ENCODE measurements at regions of chr6 and their contacts with region 1.

Region 1: DNA sequence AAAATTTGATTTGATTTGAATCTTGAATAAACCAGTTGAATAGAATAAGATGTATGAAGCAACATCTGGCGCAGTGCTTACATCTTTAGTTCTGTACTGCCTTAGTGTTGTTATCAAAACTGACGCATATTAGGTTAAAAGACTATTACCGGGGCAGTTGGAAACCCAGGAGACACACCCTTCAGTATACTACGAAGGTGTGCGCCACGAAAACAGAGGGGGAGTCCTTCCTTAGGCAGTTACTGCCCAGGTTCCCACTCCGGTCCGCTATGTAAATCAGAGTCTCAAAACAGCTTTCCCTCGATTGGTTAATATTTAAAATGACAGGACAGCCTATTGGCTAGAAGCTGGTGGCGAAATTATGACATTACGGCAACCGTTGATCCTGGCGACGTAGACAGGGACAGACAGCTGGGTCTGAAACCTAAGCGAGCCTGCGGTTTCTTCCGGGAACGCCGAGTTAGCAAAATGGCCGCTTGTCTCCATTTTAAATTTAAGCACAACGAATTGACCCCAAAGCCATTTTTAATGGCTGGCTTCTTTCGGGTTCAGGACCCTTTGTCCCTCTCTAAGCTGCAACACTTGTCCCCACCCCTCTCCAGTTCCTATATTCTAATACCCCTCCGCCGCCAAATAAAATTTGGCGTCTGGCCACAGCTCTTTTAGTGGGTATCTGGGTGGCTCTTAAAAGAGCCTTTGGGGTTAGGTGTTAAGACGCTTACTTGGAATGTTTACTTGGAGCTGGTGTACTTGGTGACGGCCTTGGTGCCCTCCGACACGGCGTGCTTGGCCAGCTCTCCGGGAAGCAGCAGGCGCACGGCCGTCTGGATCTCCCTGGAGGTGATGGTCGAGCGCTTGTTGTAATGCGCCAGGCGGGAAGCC is 35.8 kb downstream of the HFE start:
- DNase-seq: peak; percentile 84 to 95
- H3K4me3 ChIP-seq: peak overlapping the region; percentile 82 to 100 (median 98)
- H3K27ac ChIP-seq: peak overlapping the region; percentile 91
- H3K4me1 ChIP-seq: peaks cover 1 to 9% (median 4%) of the 10 kb centered on the region in 4 experiments; a peak in 4 of 7 replicates
- H3K27me3 ChIP-seq: no peaks in the 10 kb centered on the region
- CTCF ChIP-seq: no peak
- EP300 ChIP-seq: peak in 1 of 2 experiments; percentile 98; a peak in 2 of 3 replicates
- POLR2A ChIP-seq: peak; percentile 96 to 97
- RAD21 ChIP-seq: no peak

Region 2: DNA sequence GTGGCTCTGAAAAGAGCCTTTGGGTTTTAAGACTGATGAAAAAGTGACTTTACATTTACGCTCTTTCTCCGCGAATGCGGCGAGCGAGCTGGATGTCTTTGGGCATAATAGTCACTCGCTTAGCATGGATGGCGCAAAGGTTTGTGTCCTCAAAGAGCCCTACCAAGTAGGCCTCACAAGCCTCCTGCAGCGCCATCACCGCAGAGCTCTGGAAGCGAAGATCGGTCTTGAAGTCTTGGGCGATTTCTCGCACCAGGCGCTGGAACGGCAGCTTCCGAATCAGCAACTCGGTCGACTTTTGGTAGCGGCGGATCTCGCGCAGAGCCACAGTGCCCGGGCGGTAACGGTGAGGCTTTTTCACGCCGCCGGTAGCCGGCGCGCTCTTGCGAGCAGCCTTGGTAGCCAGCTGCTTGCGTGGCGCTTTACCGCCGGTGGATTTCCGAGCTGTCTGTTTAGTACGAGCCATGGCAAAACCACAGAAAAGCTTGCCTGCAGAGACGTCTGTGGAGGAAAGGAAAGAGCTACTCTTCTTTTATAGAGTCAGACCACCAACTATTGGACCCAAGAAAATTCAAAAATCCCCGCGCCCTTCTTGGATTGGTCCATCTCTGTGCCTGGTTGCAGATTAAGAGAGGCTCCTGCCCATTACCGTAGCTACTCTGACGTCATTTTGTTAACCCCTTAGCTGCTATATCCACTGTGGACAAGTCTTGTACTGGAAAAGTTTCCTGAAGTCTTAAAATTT is 91.3 kb before region 1 on chr6:
- CTCF ChIA-PET with region 1: interaction called, 4 read pairs
- POLR2A ChIA-PET with region 1: interaction called, 533 read pairs
- DNase-seq: peak; percentile 82 to 88
- H3K4me3 ChIP-seq: peak overlapping the region; percentile 81 to 95 (median 92)
- H3K27ac ChIP-seq: peak overlapping the region; percentile 96
- H3K4me1 ChIP-seq: peaks cover 2 to 18% (median 13%) of the 10 kb centered on the region in 4 experiments; a peak in 5 of 7 replicates
- H3K27me3 ChIP-seq: no peaks in the 10 kb centered on the region
- CTCF ChIP-seq: no peak
- EP300 ChIP-seq: peak in 1 of 2 experiments; percentile 2; a peak in 1 of 3 replicates
- POLR2A ChIP-seq: peak; percentile 99 to 100
- RAD21 ChIP-seq: no peak

Region 3: GRCh38 chr6:26103770-26104456 is 19.1 kb before region 1 on chr6:
- CTCF ChIA-PET with region 1: interaction called, 6 read pairs
- POLR2A ChIA-PET with region 1: interaction called, 322 read pairs
- DNase-seq: peak; percentile 80 to 83
- H3K4me3 ChIP-seq: peak overlapping the region; percentile 41 to 63 (median 52)
- H3K27ac ChIP-seq: peak overlapping the region; percentile 92
- H3K4me1 ChIP-seq: peaks cover 0 to 3% (median 0%) of the 10 kb centered on the region in 4 experiments; a peak in 2 of 7 replicates
- H3K27me3 ChIP-seq: no peaks in the 10 kb centered on the region
- CTCF ChIP-seq: peak in 2 of 3 experiments; percentile 26 to 37; a peak in 3 of 4 replicates
- EP300 ChIP-seq: peak in 1 of 2 experiments; percentile 96; a peak in 1 of 3 replicates
- POLR2A ChIP-seq: peak; percentile 98 to 99
- RAD21 ChIP-seq: no peak; a peak in 1 of 4 replicates

Region 4: DNA sequence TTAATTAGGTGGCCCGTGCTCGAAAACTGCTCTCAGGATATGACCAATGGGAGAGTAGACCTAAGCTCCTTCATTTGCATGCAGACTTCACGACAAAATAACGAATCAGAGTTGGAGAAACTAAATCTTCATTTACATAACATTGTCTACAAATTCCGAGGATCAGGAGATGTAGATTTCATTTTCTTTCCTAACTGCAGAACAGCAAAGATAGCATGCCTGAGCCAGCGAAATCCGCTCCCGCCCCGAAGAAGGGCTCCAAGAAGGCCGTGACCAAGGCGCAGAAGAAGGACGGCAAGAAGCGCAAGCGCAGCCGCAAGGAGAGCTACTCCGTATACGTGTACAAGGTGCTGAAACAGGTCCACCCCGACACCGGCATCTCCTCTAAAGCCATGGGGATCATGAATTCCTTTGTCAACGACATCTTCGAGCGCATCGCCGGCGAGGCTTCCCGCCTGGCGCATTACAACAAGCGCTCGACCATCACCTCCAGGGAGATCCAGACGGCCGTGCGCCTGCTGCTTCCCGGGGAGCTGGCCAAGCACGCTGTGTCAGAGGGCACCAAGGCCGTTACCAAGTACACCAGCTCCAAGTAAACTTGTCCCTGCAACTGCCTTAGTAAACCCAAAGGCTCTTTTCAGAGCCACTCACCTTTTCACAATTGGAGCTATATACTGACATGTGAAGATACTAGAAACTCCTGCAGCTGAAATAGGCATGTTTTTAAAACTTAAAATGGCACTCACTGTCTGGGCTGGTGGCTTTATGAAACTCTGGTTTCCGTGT is 60.7 kb after region 1 on chr6:
- CTCF ChIA-PET with region 1: no interaction called
- POLR2A ChIA-PET with region 1: interaction called, 632 read pairs
- DNase-seq: peak in 1 of 2 experiments; percentile 82
- H3K4me3 ChIP-seq: peak overlapping the region; percentile 45 to 73 (median 70)
- H3K27ac ChIP-seq: peak overlapping the region; percentile 97
- H3K4me1 ChIP-seq: peaks cover 0 to 17% (median 8%) of the 10 kb centered on the region in 4 experiments; a peak in 5 of 7 replicates
- H3K27me3 ChIP-seq: no peaks in the 10 kb centered on the region
- CTCF ChIP-seq: no peak
- EP300 ChIP-seq: no peak
- POLR2A ChIP-seq: peak; percentile 94 to 99
- RAD21 ChIP-seq: no peak

Region 5: GRCh38 chr6:26240154-26241032 is 117.4 kb after region 1 on chr6:
- CTCF ChIA-PET with region 1: no interaction called
- POLR2A ChIA-PET with region 1: interaction called, 79 read pairs
- DNase-seq: peak in 1 of 2 experiments; percentile 78
- H3K4me3 ChIP-seq: peak overlapping the region; percentile 64 to 96 (median 87)
- H3K27ac ChIP-seq: peak overlapping the region; percentile 96
- H3K4me1 ChIP-seq: peaks cover 1 to 8% (median 4%) of the 10 kb centered on the region in 4 experiments; a peak in 6 of 7 replicates
- H3K27me3 ChIP-seq: no peaks in the 10 kb centered on the region
- CTCF ChIP-seq: no peak
- EP300 ChIP-seq: peak in 1 of 2 experiments; percentile 87; a peak in 1 of 3 replicates
- POLR2A ChIP-seq: peak; percentile 100
- RAD21 ChIP-seq: no peak

Region 6: GRCh38 chr6:26401987-26402658 is 279.1 kb after region 1 on chr6 and contains the start of gene BTN3A1:
- CTCF ChIA-PET with region 1: no interaction called
- POLR2A ChIA-PET with region 1: no interaction called
- DNase-seq: peak in 1 of 2 experiments; percentile 71
- H3K4me3 ChIP-seq: peak within 1 kb of the TSS; percentile 45 to 77 (median 60); a peak in 7 of 8 replicates
- H3K27ac ChIP-seq: 0 out of 2 replicates have a peak within 1 kb of the TSS, but pooled peaks have one; percentile 23
- H3K4me1 ChIP-seq: peaks cover 0 to 2% (median 0%) of the 10 kb centered on the region in 4 experiments; a peak in 1 of 7 replicates
- H3K27me3 ChIP-seq: no peaks in the 10 kb centered on the region
- CTCF ChIP-seq: no peak
- EP300 ChIP-seq: no peak
- POLR2A ChIP-seq: no peak
- RAD21 ChIP-seq: no peak
- total RNA-seq, gene BTN3A1: 5.1 and 5.6 TPM in 2 replicates

Region 7: DNA sequence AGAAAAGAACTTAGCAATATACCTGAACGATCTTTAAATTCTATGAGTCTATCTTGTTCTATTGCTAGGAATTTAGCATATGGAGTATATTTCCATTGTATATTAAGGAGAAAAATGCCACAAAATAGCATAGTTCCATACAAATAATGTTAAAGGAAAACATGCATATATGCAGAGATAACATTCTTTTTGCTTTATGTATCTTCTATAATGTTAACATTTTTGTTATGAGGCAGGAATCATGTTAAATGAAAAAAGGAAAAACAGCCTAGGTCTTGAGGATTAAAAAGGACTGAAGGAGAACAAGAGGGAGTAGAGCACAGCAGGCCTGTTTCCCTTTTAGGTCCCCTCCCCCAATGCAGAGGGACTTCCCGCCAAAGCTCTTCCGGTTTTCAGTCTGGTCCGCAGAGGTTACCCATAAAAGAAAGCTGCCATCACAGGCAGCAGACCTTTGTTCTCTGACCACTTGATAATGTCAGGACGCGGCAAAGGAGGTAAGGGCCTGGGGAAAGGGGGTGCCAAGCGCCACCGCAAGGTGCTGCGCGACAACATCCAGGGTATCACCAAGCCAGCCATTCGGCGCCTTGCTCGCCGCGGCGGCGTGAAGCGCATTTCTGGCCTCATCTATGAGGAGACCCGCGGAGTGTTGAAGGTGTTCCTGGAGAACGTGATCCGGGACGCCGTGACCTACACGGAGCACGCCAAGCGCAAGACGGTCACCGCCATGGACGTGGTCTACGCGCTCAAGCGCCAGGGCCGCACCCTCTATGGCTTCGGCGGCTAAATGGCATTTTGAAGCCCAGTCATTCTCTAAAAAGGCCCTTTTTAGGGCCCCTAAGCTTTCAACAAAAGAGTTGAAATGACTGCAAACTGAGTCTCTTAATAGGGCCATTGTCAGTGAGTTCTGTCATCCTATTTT is 1016.1 kb after region 1 on chr6:
- CTCF ChIA-PET with region 1: no interaction called
- POLR2A ChIA-PET with region 1: interaction called, 25 read pairs
- DNase-seq: peak; percentile 91 to 92
- H3K4me3 ChIP-seq: peak overlapping the region; percentile 50 to 95 (median 70)
- H3K27ac ChIP-seq: peak overlapping the region; percentile 95
- H3K4me1 ChIP-seq: peaks cover 0 to 10% (median 4%) of the 10 kb centered on the region in 4 experiments; a peak in 5 of 7 replicates
- H3K27me3 ChIP-seq: no peaks in the 10 kb centered on the region
- CTCF ChIP-seq: no peak
- EP300 ChIP-seq: peak; percentile 40 to 99
- POLR2A ChIP-seq: peak; percentile 91 to 99
- RAD21 ChIP-seq: no peak

Region 8: GRCh38 chr6:27864906-27865849 is 1742.1 kb after region 1 on chr6:
- CTCF ChIA-PET with region 1: no interaction called
- POLR2A ChIA-PET with region 1: interaction called, 50 read pairs
- DNase-seq: peak in 1 of 2 experiments; percentile 86
- H3K4me3 ChIP-seq: peak overlapping the region; percentile 61 to 86 (median 79)
- H3K27ac ChIP-seq: peak overlapping the region; percentile 90
- H3K4me1 ChIP-seq: peaks cover 0 to 5% (median 1%) of the 10 kb centered on the region in 4 experiments; a peak in 2 of 7 replicates
- H3K27me3 ChIP-seq: no peaks in the 10 kb centered on the region
- CTCF ChIP-seq: no peak
- EP300 ChIP-seq: no peak
- POLR2A ChIP-seq: peak; percentile 93 to 97
- RAD21 ChIP-seq: no peak; a peak in 1 of 4 replicates

Measured in H1 (cell line).